HCT116 (cell line): ENCODE measurements at regions of chr3 and their contacts with region 1.

Region 1: GRCh38 chr3:52154117-52155094 is at the start of gene POC1A:
- DNase-seq: peak; percentile 97
- ATAC-seq: peak; percentile 89
- H3K4me3 ChIP-seq: peak within 1 kb of the TSS; percentile 86 to 92
- H3K27ac ChIP-seq: peak within 1 kb of the TSS; percentile 62
- H3K4me1 ChIP-seq: peaks cover 8 to 30% of the 10 kb centered on the region in 2 experiments
- H3K27me3 ChIP-seq: no peaks in the 10 kb centered on the region
- CTCF ChIP-seq: no peak
- POLR2A ChIP-seq: peak; percentile 59
- RAD21 ChIP-seq: no peak
- total RNA-seq, gene POC1A: 34.0 TPM

Region 2: DNA sequence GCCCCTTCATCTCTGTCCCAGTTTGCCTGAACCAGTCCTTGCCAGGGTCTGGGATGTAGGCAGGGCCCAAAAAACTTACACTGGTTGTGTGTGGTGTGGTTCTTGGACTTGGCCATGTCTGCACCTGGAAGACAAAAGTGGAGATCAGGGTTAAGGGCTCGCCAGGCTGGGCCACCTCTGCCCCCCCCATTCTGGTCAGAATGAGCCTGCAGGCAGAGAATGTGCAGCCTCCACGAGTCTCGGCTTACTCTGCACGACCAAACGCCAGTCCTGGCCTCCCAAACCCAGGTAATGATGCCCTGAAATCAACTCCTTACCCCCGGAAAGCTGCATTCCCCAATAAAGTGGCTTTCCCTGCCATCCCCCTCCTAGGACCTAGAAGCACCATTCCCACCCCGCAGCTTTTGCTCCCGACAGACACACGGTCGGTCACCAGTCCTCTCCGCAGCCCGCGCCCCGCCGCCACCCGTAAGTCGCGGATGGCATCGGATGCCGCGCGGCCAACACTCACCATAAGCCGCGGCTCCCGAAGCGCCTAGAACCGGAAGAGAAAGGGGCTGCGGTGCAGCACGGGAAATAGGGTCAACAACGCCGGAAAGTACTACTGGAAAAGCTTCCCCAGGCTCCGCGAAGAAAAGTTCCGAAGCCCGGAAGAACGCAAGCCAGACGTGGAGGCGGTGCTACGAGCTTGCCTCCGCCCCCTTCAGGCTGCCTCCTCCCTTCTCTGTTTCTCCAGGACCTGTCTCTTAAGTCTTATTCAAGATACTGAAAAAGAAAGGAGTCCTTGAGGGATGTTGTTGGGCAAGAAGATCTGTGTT is 158.9 kb before region 1 on chr3 and contains the start of gene RPL29:
- CTCF ChIA-PET with region 1: no interaction called
- POLR2A ChIA-PET with region 1: interaction called, 14 read pairs
- RAD21 ChIA-PET with region 1: no interaction called
- intact Hi-C with region 1: no loop called
- DNase-seq: peak; percentile 90
- ATAC-seq: peak; percentile 72
- H3K4me3 ChIP-seq: peak within 1 kb of the TSS; percentile 82 to 100
- H3K27ac ChIP-seq: peak within 1 kb of the TSS; percentile 88
- H3K4me1 ChIP-seq: peaks cover 13 to 46% of the 10 kb centered on the region in 2 experiments
- H3K27me3 ChIP-seq: no peaks in the 10 kb centered on the region
- CTCF ChIP-seq: no peak
- POLR2A ChIP-seq: peak; percentile 92
- RAD21 ChIP-seq: no peak
- total RNA-seq, gene RPL29: 1,880 TPM

Region 3: GRCh38 chr3:52171514-52172261 is 17.3 kb after region 1 on chr3:
- CTCF ChIA-PET with region 1: interaction called, 5 read pairs
- POLR2A ChIA-PET with region 1: interaction called, 13 read pairs
- RAD21 ChIA-PET with region 1: no interaction called
- intact Hi-C with region 1: no loop called
- DNase-seq: peak; percentile 27
- ATAC-seq: peak; percentile 68
- H3K4me3 ChIP-seq: no peak overlapping the region
- H3K27ac ChIP-seq: no peak overlapping the region
- H3K4me1 ChIP-seq: peaks cover 6 to 15% of the 10 kb centered on the region in 2 experiments; a peak in 3 of 4 replicates
- H3K27me3 ChIP-seq: no peaks in the 10 kb centered on the region
- CTCF ChIP-seq: peak in 1 of 3 experiments; percentile 9; a peak in 1 of 6 replicates
- POLR2A ChIP-seq: no peak
- RAD21 ChIP-seq: peak; percentile 38; the same call in 1 of the 2 replicates

Region 4: GRCh38 chr3:52197842-52198668 is 43.6 kb after region 1 on chr3 and contains the start of gene ALAS1:
- CTCF ChIA-PET with region 1: no interaction called
- POLR2A ChIA-PET with region 1: interaction called, 4 read pairs
- RAD21 ChIA-PET with region 1: no interaction called
- intact Hi-C with region 1: loop called (anchors 2 kb)
- DNase-seq: peak; percentile 65
- ATAC-seq: peak; percentile 90
- H3K4me3 ChIP-seq: peak within 1 kb of the TSS; percentile 79 to 89
- H3K27ac ChIP-seq: peak within 1 kb of the TSS; percentile 87
- H3K4me1 ChIP-seq: peaks cover 9 to 28% of the 10 kb centered on the region in 2 experiments
- H3K27me3 ChIP-seq: no peaks in the 10 kb centered on the region
- CTCF ChIP-seq: no peak
- POLR2A ChIP-seq: peak; percentile 91
- RAD21 ChIP-seq: no peak
- total RNA-seq, gene ALAS1: 74.0 TPM

Region 5: DNA sequence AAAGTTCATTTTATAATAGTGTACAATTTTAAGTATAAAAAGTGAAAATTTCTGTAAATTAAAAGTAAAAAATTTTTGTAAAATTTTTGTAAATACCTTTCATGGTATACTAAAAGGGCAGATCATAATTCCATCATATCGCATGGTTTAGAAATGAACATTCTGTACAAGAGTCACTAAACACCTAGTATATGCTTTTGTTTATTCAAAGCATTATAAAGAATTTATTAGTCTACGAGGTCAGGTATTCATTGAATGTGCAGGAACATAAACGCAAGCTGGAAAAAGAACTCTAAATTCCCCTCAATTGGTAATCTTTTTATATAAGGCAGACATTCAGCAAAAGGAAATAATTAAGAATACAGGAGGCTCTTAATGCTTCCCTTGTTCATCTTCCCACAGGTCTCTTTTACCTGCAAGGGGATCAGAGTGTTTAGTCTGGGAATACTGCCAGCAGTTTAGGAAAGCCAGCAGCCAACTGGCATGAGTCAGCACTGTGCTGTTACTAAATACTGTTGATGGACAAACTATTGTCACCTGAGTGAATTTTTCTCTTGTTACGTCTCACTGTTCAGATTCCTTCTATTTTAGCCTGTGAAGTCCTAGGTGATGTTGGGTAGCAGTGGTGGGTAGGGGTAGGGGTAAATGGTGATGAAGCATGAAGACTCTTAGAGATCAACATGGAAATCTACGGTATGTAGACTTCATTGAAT is 452.1 kb after region 1 on chr3:
- CTCF ChIA-PET with region 1: no interaction called
- POLR2A ChIA-PET with region 1: no interaction called
- RAD21 ChIA-PET with region 1: no interaction called
- intact Hi-C with region 1: no loop called
- DNase-seq: peak; percentile 89
- ATAC-seq: peak; percentile 94
- H3K4me3 ChIP-seq: peak overlapping the region in 1 of 2 experiments; percentile 11; a peak in 1 of 4 replicates
- H3K27ac ChIP-seq: peak overlapping the region; percentile 57; the same call in 1 of the 2 replicates
- H3K4me1 ChIP-seq: peaks cover 23 to 33% of the 10 kb centered on the region in 2 experiments
- H3K27me3 ChIP-seq: no peaks in the 10 kb centered on the region
- CTCF ChIP-seq: no peak
- POLR2A ChIP-seq: no peak
- RAD21 ChIP-seq: no peak

Region 6: DNA sequence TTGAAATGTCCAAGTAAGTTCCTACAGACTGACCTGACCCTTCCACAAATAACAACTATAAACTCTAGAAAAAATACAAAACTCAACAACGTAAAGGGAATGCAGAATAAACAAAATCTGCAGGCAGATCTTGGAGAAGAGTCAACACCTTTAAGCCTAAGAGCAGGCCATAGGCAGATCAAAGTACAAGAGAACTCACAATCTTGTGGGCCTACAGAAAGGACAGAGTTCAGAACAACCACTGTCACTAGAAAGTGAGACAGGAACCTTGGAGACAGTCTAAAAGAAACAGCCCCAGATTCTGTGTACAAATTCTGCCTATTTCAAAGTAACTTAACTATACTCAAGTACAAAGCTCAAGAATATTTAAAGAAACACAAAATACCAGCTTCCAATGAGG is 585.3 kb after region 1 on chr3:
- CTCF ChIA-PET with region 1: no interaction called
- POLR2A ChIA-PET with region 1: no interaction called
- RAD21 ChIA-PET with region 1: no interaction called
- intact Hi-C with region 1: no loop called
- DNase-seq: no peak
- ATAC-seq: no peak
- H3K4me3 ChIP-seq: no peak overlapping the region
- H3K27ac ChIP-seq: no peak overlapping the region
- H3K4me1 ChIP-seq: no peaks in the 10 kb centered on the region
- H3K27me3 ChIP-seq: no peaks in the 10 kb centered on the region
- CTCF ChIP-seq: no peak
- POLR2A ChIP-seq: no peak
- RAD21 ChIP-seq: no peak